Ascending aorta (tissue), 2 donors: ENCODE measurements at regions of chr5 and their contacts with region 1.

Region 1: GRCh38 chr5:158979749-158980521 is 119.8 kb downstream of the EBF1 start:
- DNase-seq: peak in 1 of 2 donors; percentile 81
- H3K4me3 ChIP-seq: peak overlapping the region; percentile 28 to 54
- H3K27ac ChIP-seq: peak overlapping the region; percentile 75 to 76
- H3K4me1 ChIP-seq: peaks cover 7 to 43% of the 10 kb centered on the region in 2 donors
- H3K27me3 ChIP-seq: no peaks in the 10 kb centered on the region
- CTCF ChIP-seq: no peak

Region 2: DNA sequence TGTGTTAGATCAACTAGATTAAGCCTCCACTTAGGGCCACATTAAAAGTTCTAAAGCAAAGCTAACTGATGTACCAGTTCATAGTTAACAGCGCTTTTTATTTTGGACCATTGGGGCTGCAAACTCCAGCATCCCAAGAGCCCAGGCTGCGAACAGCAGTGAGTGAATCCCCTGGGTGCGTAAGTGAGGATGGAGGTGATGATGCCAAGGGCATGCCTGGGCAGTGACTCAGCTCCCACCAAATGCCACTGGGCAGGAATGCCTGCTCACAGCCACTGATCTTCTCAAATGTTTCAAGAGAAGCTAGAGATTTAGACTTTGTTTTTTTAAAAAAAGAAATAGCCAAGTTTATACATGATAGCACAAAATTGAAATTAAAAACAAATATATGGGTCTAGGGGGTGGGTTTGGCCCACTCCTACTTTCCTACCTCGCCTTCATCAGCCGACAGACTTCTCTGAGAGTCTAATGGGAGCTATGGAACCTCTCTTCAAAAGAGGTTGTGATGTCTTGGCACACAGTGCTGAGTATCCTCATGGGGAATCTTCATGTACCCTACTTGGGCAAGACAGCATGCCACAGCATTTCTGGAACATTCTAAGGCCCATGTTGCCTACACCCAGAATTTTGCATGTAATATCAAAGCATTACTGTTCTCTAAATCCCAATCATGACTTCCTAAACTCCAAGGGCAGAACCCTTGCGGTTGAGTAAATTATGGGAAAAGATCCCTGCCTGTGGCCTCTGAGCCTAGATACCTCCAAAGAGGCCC is 278.3 kb before region 1 on chr5:
- intact Hi-C with region 1: loop called (anchors 5 kb)
- DNase-seq: peak in 1 of 2 donors; percentile 92
- H3K4me3 ChIP-seq: no peak overlapping the region
- H3K27ac ChIP-seq: peak overlapping the region; percentile 69 to 80
- H3K4me1 ChIP-seq: peaks cover 9 to 54% of the 10 kb centered on the region in 2 donors
- H3K27me3 ChIP-seq: no peaks in the 10 kb centered on the region
- CTCF ChIP-seq: no peak

Region 3: GRCh38 chr5:158875272-158875679 is 104.7 kb before region 1 on chr5:
- intact Hi-C with region 1: loop called (anchors 5 kb)
- DNase-seq: no peak
- H3K4me3 ChIP-seq: peak overlapping the region; percentile 37 to 54
- H3K27ac ChIP-seq: peak overlapping the region; percentile 55 to 71
- H3K4me1 ChIP-seq: peaks cover 3 to 47% of the 10 kb centered on the region in 2 donors
- H3K27me3 ChIP-seq: no peaks in the 10 kb centered on the region
- CTCF ChIP-seq: no peak

Region 4: DNA sequence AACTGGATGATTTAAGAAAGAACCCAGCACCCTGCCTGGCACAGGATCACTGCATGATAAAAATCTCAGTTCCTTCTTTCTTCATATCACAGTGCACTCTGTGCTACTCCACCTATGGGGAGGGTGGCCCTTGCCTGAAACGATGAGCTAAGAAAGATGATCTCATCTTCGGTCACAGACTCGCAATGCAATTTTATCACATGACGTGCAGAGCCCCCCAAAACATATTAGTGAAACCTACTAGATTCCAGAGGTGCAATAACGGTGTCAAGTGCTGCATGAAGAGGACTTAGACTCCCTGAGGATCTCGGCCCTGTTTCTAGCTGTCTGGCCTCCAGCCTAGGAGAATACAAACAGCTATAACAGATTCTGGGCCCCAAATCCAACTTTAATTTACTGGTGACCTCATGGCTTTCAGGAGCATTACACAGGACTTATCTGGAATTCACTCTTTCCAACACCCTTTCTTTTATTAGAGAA is 15.8 kb after region 1 on chr5:
- intact Hi-C with region 1: loop called (anchors 2 kb)
- DNase-seq: no peak
- H3K4me3 ChIP-seq: no peak overlapping the region
- H3K27ac ChIP-seq: peak overlapping the region; percentile 73 to 78
- H3K4me1 ChIP-seq: peaks cover 5 to 49% of the 10 kb centered on the region in 2 donors
- H3K27me3 ChIP-seq: no peaks in the 10 kb centered on the region
- CTCF ChIP-seq: no peak

Region 5: DNA sequence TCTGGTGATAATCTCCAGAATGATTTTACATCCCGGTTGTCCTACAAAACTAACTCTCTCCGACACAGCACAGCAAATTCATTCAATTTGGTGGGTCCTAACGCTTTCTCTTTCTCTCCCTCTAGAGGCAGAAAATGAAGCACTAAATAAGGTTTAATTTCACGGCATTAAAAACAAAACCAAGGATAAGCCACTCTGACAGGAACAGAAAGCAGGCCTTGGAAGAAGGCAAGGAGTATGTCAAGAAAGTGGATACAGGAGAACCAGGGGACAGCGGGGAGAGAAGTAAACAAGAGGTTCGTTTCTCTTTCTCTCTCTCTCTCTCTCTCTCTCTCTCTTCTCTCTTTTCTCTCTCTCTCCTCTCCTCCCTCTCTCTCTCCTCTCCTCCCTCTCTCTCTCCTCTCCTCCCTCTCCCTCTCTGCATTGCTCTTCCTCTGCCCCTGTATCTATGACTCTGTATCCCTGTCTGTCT is 69.9 kb after region 1 on chr5:
- intact Hi-C with region 1: loop called (anchors 5 kb)
- DNase-seq: no peak
- H3K4me3 ChIP-seq: peak overlapping the region; percentile 43 to 64
- H3K27ac ChIP-seq: peak overlapping the region; percentile 80 to 87
- H3K4me1 ChIP-seq: peaks cover 4 to 52% of the 10 kb centered on the region in 2 donors
- H3K27me3 ChIP-seq: no peaks in the 10 kb centered on the region
- CTCF ChIP-seq: peak; percentile 35 to 63 (median 44)